ENCODE measurements at regions of chr1 and their contacts with region 1.

Region 1: DNA sequence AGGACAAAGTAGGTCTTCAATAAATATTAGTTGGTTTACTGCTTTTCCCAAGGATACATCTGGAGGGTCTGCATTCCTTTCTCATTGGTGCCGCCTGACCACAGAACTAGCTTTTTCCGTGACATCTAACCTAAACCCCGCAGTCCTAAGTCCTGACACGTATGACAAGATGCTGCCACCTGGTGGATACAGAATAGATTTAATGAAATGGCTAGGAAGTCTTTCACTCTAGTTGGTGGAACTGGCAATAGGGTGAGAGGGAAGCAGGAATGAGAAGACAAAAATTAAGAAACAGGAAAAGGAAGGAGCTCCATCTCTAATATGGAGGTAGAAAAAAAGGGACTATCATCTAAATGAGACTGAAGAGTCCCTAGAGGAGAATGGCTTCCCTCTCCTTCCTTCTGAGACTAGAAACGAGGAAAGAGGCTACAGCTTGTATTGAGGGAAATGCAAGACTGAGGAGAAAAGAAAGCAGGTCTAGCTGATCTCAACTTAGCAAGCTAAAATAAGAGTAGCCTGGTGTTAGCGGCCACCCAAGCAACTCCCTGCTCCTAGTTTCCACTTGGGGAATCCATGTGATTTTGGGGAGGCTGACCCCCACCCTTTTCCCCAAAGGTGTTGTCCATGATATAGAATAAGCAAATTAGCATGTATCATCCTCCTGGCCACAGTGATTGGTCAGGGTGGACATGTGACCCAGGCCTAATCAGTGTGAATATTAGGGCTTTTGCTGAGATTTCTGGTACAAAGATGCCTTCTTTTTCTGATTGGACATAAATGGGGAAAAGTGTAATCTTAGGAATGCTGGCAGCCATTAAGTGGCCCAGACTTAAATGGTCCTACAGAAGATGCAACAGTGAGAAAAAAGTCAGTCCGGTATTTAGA is 5.9 kb downstream of the RFX5 start:
- DNase-seq: peak; percentile 66 to 75 (median 69)
- H3K4me3 ChIP-seq: no peak overlapping the region
- H3K4me3 Mint-ChIP-seq: peak overlapping the region in 2 of 8 donors; percentile 4 to 22
- H3K27ac ChIP-seq: peak overlapping the region; percentile 31
- H3K27ac Mint-ChIP-seq: peak overlapping the region; percentile 1 to 83 (median 52)
- H3K4me1 ChIP-seq: peaks cover 21% of the 10 kb centered on the region
- H3K4me1 Mint-ChIP-seq: peaks cover 17 to 29% (median 21%) of the 10 kb centered on the region in 4 donors
- H3K27me3 ChIP-seq: no peaks in the 10 kb centered on the region
- H3K27me3 Mint-ChIP-seq: no peaks in the 10 kb centered on the region

Region 2: DNA sequence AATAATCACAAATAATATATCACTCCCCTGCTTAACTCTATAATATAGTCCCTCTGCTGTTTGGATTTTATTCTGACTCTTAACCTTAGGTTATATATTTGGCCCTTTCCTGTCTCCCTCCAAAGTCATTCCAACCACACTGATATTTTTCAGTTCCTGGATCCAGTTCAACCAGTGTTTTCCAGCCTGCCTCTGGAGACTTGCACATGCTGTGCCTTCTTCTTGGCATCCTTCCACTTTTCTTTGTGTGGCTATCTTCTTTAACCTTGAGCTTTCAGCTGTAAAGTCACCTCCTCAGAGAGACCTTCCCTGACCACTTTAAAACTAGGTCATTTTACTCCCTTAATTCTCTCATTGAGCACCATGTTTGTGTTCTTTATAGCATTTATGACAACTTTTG is 385.8 kb before region 1 on chr1:
- CTCF ChIA-PET with region 1: no interaction called
- POLR2A ChIA-PET with region 1: no interaction called
- intact Hi-C with region 1: no loop called
- DNase-seq: no peak
- H3K4me3 ChIP-seq: no peak overlapping the region
- H3K4me3 Mint-ChIP-seq: no peak overlapping the region
- H3K27ac ChIP-seq: no peak overlapping the region
- H3K27ac Mint-ChIP-seq: peak overlapping the region in 6 of 7 donors; percentile 4 to 84 (median 56)
- H3K4me1 ChIP-seq: no peaks in the 10 kb centered on the region
- H3K4me1 Mint-ChIP-seq: peaks cover 0 to 2% (median 0%) of the 10 kb centered on the region in 4 donors
- H3K27me3 ChIP-seq: no peaks in the 10 kb centered on the region
- H3K27me3 Mint-ChIP-seq: no peaks in the 10 kb centered on the region

Region 3: GRCh38 chr1:151106894-151107293 is 234.2 kb before region 1 on chr1:
- CTCF ChIA-PET with region 1: interaction called, 32 read pairs
- POLR2A ChIA-PET with region 1: no interaction called
- intact Hi-C with region 1: no loop called
- DNase-seq: no peak
- H3K4me3 ChIP-seq: no peak overlapping the region
- H3K4me3 Mint-ChIP-seq: no peak overlapping the region
- H3K27ac ChIP-seq: no peak overlapping the region
- H3K27ac Mint-ChIP-seq: peak overlapping the region in 1 of 7 donors; percentile 31
- H3K4me1 ChIP-seq: no peaks in the 10 kb centered on the region
- H3K4me1 Mint-ChIP-seq: no peaks in the 10 kb centered on the region
- H3K27me3 ChIP-seq: no peaks in the 10 kb centered on the region
- H3K27me3 Mint-ChIP-seq: no peaks in the 10 kb centered on the region

Region 4: GRCh38 chr1:151198255-151199127 is 142.6 kb before region 1 on chr1 and contains the start of gene PIP5K1A:
- CTCF ChIA-PET with region 1: interaction called, 17 read pairs
- POLR2A ChIA-PET with region 1: no interaction called
- intact Hi-C with region 1: loop called (anchors 2 kb)
- DNase-seq: peak; percentile 96 to 99 (median 98)
- H3K4me3 ChIP-seq: peak within 1 kb of the TSS; percentile 89 to 99
- H3K4me3 Mint-ChIP-seq: peak within 1 kb of the TSS; percentile 96 to 100 (median 98)
- H3K27ac ChIP-seq: peak within 1 kb of the TSS; percentile 79
- H3K27ac Mint-ChIP-seq: peak within 1 kb of the TSS; percentile 93 to 100 (median 97)
- H3K4me1 ChIP-seq: peaks cover 34% of the 10 kb centered on the region
- H3K4me1 Mint-ChIP-seq: peaks cover 29 to 53% (median 41%) of the 10 kb centered on the region in 4 donors
- H3K27me3 ChIP-seq: no peaks in the 10 kb centered on the region
- H3K27me3 Mint-ChIP-seq: peaks cover 0 to 2% of the 10 kb centered on the region in 2 donors
- total RNA-seq, gene PIP5K1A: 50.8 to 53.1 TPM

Region 5: GRCh38 chr1:151292207-151293030 is 48.7 kb before region 1 on chr1:
- CTCF ChIA-PET with region 1: interaction called, 247 read pairs
- POLR2A ChIA-PET with region 1: interaction called, 4 read pairs
- intact Hi-C with region 1: no loop called
- DNase-seq: no peak
- H3K4me3 ChIP-seq: no peak overlapping the region
- H3K4me3 Mint-ChIP-seq: no peak overlapping the region
- H3K27ac ChIP-seq: no peak overlapping the region
- H3K27ac Mint-ChIP-seq: peak overlapping the region in 4 of 7 donors; percentile 17 to 84 (median 59)
- H3K4me1 ChIP-seq: no peaks in the 10 kb centered on the region
- H3K4me1 Mint-ChIP-seq: peaks cover 2 to 9% (median 8%) of the 10 kb centered on the region in 4 donors
- H3K27me3 ChIP-seq: no peaks in the 10 kb centered on the region
- H3K27me3 Mint-ChIP-seq: no peaks in the 10 kb centered on the region

Region 6: GRCh38 chr1:151311589-151312331 is 29.4 kb before region 1 on chr1:
- CTCF ChIA-PET with region 1: interaction called, 247 read pairs
- POLR2A ChIA-PET with region 1: interaction called, 3 read pairs
- intact Hi-C with region 1: no loop called
- DNase-seq: peak in 3 of 5 donors; percentile 17 to 90 (median 22)
- H3K4me3 ChIP-seq: no peak overlapping the region
- H3K4me3 Mint-ChIP-seq: peak overlapping the region in 5 of 8 donors; percentile 5 to 37 (median 14)
- H3K27ac ChIP-seq: no peak overlapping the region
- H3K27ac Mint-ChIP-seq: peak overlapping the region; percentile 29 to 84 (median 78)
- H3K4me1 ChIP-seq: peaks cover 37% of the 10 kb centered on the region
- H3K4me1 Mint-ChIP-seq: peaks cover 25 to 53% (median 35%) of the 10 kb centered on the region in 4 donors
- H3K27me3 ChIP-seq: no peaks in the 10 kb centered on the region
- H3K27me3 Mint-ChIP-seq: no peaks in the 10 kb centered on the region

Region 7: GRCh38 chr1:151352006-151352689 is 11.0 kb after region 1 on chr1:
- CTCF ChIA-PET with region 1: interaction called, 11 read pairs
- POLR2A ChIA-PET with region 1: interaction called, 3 read pairs
- intact Hi-C with region 1: no loop called
- DNase-seq: no peak
- H3K4me3 ChIP-seq: no peak overlapping the region
- H3K4me3 Mint-ChIP-seq: no peak overlapping the region
- H3K27ac ChIP-seq: no peak overlapping the region
- H3K27ac Mint-ChIP-seq: peak overlapping the region in 1 of 7 donors; percentile 25
- H3K4me1 ChIP-seq: peaks cover 9% of the 10 kb centered on the region
- H3K4me1 Mint-ChIP-seq: peaks cover 6 to 12% (median 11%) of the 10 kb centered on the region in 4 donors
- H3K27me3 ChIP-seq: no peaks in the 10 kb centered on the region
- H3K27me3 Mint-ChIP-seq: no peaks in the 10 kb centered on the region

Measured in CD4-positive, alpha-beta memory T cell (primary cell).